Activated CD4-positive, alpha-beta T cell treated with anti-CD3 and anti-CD28 coated beads for 36 hours (primary cell): ENCODE measurements at regions of chr5 and their contacts with region 1.

Region 1: GRCh38 chr5:180424094-180424493 is 70.1 kb upstream of the CNOT6 start:
- DNase-seq: no peak
- ATAC-seq: no peak
- H3K4me3 Mint-ChIP-seq: no peak overlapping the region
- H3K27ac Mint-ChIP-seq: no peak overlapping the region
- H3K4me1 Mint-ChIP-seq: no peaks in the 10 kb centered on the region
- H3K27me3 Mint-ChIP-seq: no peaks in the 10 kb centered on the region

Region 2: GRCh38 chr5:180390441-180391190 is 33.5 kb before region 1 on chr5:
- CTCF ChIA-PET with region 1: no interaction called
- POLR2A ChIA-PET with region 1: no interaction called
- intact Hi-C with region 1: no loop called
- DNase-seq: no peak
- ATAC-seq: no peak
- H3K4me3 Mint-ChIP-seq: no peak overlapping the region
- H3K27ac Mint-ChIP-seq: no peak overlapping the region
- H3K4me1 Mint-ChIP-seq: no peaks in the 10 kb centered on the region
- H3K27me3 Mint-ChIP-seq: peaks cover 2% of the 10 kb centered on the region

Region 3: GRCh38 chr5:180411948-180412347 is 12.1 kb before region 1 on chr5:
- CTCF ChIA-PET with region 1: interaction called, 6 read pairs
- POLR2A ChIA-PET with region 1: no interaction called
- intact Hi-C with region 1: loop called in 1 of 2 experiments (anchors 2 kb)
- DNase-seq: no peak
- ATAC-seq: no peak
- H3K4me3 Mint-ChIP-seq: no peak overlapping the region
- H3K27ac Mint-ChIP-seq: no peak overlapping the region
- H3K4me1 Mint-ChIP-seq: no peaks in the 10 kb centered on the region
- H3K27me3 Mint-ChIP-seq: peaks cover 4% of the 10 kb centered on the region

Region 4: DNA sequence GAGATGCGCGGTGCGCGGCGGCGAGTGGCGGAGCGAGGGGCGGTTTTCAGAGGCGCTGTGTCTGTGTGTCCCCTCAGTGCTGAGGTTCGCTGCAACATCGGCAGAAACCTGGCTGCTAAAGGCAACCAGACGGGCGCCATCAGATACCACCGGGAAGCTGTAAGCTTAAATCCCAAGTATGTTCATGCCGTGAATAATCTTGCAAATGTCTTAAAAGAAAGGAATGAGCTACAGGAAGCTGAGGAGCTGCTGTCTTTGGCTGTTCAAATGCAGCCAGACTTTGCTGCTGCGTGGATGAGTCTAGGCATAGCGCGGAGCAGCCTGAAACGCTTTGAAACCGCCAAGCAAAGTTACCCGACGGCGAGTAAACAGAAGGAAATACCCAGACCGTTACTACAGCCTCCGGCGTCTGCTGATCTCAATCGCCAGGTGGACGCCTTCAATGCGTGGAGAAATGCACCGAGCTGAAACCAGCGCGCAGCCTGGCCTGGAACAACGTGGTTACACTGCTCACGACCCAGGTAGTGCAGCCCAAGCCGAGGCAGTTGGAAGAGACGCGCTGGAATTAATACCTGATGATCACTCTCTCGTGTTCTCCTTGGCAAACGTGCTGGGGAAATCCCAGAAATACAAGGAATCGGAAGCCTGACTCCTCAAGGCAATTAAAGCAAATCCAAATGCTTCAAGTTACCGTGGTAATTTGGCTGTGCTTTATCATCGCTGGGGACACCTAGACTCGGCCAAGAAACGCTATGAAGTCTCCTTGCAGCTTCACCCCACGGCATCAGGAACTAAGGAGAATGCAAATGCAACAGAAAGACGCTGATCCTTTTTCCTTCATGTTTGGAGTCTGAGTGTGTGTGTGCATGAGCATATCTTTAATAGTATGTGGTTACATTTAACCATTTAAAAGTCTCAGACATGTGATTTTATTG is 691.0 kb after region 1 on chr5:
- CTCF ChIA-PET with region 1: no interaction called
- POLR2A ChIA-PET with region 1: no interaction called
- intact Hi-C with region 1: no loop called
- DNase-seq: no peak
- ATAC-seq: no peak
- H3K4me3 Mint-ChIP-seq: no peak overlapping the region
- H3K27ac Mint-ChIP-seq: no peak overlapping the region
- H3K4me1 Mint-ChIP-seq: peaks cover 5% of the 10 kb centered on the region
- H3K27me3 Mint-ChIP-seq: peaks cover 67% of the 10 kb centered on the region